ENCODE measurements at regions of chr12 and their contacts with region 1.

Region 1: DNA sequence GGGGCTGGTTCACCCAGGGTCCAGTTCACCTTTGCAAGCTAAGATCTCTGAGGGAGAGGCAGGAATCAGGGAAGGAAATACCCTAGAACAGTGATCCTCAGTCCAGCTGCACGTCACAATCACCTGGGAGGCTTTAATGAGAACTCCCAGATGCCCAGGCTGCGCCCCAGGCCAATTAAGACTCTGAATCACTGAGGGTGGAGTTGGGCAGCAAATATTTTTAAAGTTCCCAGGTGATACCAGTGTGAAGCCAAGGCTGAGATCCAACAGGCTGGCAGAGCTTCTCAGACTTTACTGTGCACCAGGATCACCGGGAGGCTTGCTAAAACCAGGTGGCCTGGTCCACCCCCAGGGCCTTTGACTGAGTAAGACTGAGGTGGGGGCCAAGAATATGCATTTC is 23.8 kb downstream of the MYL2 start:
- DNase-seq: no peak
- H3K4me3 ChIP-seq: no peak overlapping the region
- H3K27ac ChIP-seq: no peak overlapping the region
- H3K4me1 ChIP-seq: peaks cover 9% of the 10 kb centered on the region
- H3K27me3 ChIP-seq: peaks cover 0 to 2% of the 10 kb centered on the region in 2 experiments
- CTCF ChIP-seq: no peak
- POLR2A ChIP-seq: no peak

Region 2: GRCh38 chr12:110846615-110847566 is 49.7 kb before region 1 on chr12 and contains the start of gene CCDC63:
- CTCF ChIA-PET with region 1: no interaction called
- POLR2A ChIA-PET with region 1: no interaction called
- dilution Hi-C with region 1: no loop called
- intact Hi-C with region 1: no loop called
- DNase-seq: peak; percentile 50
- H3K4me3 ChIP-seq: no peak within 1 kb of the TSS
- H3K27ac ChIP-seq: no peak within 1 kb of the TSS
- H3K4me1 ChIP-seq: no peaks in the 10 kb centered on the region
- H3K27me3 ChIP-seq: peaks cover 11 to 24% of the 10 kb centered on the region in 2 experiments
- CTCF ChIP-seq: peak; percentile 37 to 70
- POLR2A ChIP-seq: no peak
- total RNA-seq, gene CCDC63: not detected in 2 replicates

Region 3: DNA sequence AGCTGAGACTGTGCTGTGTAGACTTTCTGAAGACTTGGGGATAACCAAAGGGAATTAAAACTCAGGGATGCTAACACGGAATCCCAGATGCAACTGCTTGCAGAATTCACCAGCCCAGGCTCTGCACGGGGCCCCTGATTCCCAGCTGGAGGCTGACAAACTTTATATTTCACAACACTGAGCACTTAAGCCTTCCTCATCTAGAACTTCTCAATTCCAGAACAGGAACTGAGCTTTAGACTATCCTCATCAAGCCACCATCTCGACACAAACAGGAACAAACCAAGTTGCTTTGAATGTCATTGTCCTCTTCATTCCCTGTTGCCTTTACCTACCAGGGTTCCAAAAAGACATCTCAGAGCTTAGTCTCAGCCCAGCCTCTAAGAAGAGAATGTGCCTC is 27.5 kb before region 1 on chr12:
- CTCF ChIA-PET with region 1: no interaction called
- POLR2A ChIA-PET with region 1: no interaction called
- dilution Hi-C with region 1: no loop called
- intact Hi-C with region 1: no loop called
- DNase-seq: no peak
- H3K4me3 ChIP-seq: no peak overlapping the region
- H3K27ac ChIP-seq: no peak overlapping the region
- H3K4me1 ChIP-seq: no peaks in the 10 kb centered on the region
- H3K27me3 ChIP-seq: peaks cover 1 to 2% of the 10 kb centered on the region in 2 experiments
- CTCF ChIP-seq: no peak
- POLR2A ChIP-seq: no peak

Region 4: GRCh38 chr12:110917466-110917865 is 20.9 kb after region 1 on chr12:
- CTCF ChIA-PET with region 1: interaction called, 8 read pairs
- POLR2A ChIA-PET with region 1: interaction called, 5 read pairs
- dilution Hi-C with region 1: no loop called
- intact Hi-C with region 1: loop called (anchors 1 kb)
- DNase-seq: peak; percentile 69
- H3K4me3 ChIP-seq: no peak overlapping the region
- H3K27ac ChIP-seq: peak overlapping the region; percentile 77
- H3K4me1 ChIP-seq: peaks cover 17% of the 10 kb centered on the region
- H3K27me3 ChIP-seq: no peaks in the 10 kb centered on the region
- CTCF ChIP-seq: no peak
- POLR2A ChIP-seq: no peak

Region 5: GRCh38 chr12:110937104-110937641 is 40.6 kb after region 1 on chr12:
- CTCF ChIA-PET with region 1: interaction called, 14 read pairs
- POLR2A ChIA-PET with region 1: no interaction called
- dilution Hi-C with region 1: no loop called
- intact Hi-C with region 1: loop called (anchors 1 kb)
- DNase-seq: peak; percentile 56
- H3K4me3 ChIP-seq: no peak overlapping the region
- H3K27ac ChIP-seq: no peak overlapping the region
- H3K4me1 ChIP-seq: no peaks in the 10 kb centered on the region
- H3K27me3 ChIP-seq: no peaks in the 10 kb centered on the region
- CTCF ChIP-seq: peak; percentile 94 to 98
- POLR2A ChIP-seq: no peak

Region 6: GRCh38 chr12:111024205-111024801 is 127.7 kb after region 1 on chr12:
- CTCF ChIA-PET with region 1: interaction called, 3 read pairs
- POLR2A ChIA-PET with region 1: no interaction called
- dilution Hi-C with region 1: no loop called
- intact Hi-C with region 1: loop called (anchors 2 kb)
- DNase-seq: peak; percentile 30
- H3K4me3 ChIP-seq: no peak overlapping the region
- H3K27ac ChIP-seq: no peak overlapping the region
- H3K4me1 ChIP-seq: no peaks in the 10 kb centered on the region
- H3K27me3 ChIP-seq: peaks cover 2 to 5% of the 10 kb centered on the region in 2 experiments
- CTCF ChIP-seq: peak; percentile 67 to 84
- POLR2A ChIP-seq: no peak

Region 7: DNA sequence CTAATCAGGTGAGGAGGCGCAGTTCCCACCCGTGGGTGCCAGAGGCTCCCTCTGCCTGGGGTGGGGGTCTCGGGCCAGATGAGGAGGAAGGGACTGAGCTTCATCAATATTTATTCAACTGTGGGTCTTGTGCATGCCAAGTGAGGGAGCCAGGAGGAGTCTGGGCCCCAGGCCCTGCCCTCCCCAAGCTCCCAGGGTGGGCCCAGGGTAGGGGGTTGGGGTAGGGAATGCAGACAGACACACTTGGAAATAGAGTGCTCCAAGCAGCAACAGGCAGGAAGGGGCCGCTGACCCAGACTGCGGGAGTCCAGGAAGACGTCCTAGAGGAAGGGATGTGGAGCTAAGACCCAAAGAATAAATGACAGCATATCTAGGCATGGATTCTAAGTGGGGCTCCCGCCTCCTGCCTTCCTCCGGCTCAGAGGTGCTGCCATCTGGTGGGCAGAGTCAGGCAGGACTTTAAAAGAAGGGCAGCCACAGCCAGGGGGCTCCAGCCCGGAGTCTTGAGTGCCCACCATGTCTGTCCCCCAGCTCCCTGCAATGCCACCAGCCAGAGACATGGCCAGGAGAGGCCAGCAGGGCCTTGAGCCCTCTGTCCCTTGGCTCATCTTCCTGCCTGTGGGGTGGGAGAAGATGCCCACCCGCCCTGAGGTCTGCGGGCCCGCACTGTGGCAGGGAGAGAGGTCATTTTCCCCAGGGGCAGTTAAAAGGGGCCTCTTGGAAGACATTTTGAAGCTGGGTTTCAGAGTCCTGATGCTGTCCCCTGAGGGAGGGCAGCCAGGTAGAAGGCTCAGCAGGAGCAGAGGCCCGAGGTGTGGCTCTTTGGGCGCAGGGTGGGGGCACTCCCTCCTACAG is 402.2 kb after region 1 on chr12:
- CTCF ChIA-PET with region 1: interaction called, 37 read pairs
- POLR2A ChIA-PET with region 1: no interaction called
- dilution Hi-C with region 1: no loop called
- intact Hi-C with region 1: loop called (anchors 1 kb)
- DNase-seq: peak; percentile 41
- H3K4me3 ChIP-seq: no peak overlapping the region
- H3K27ac ChIP-seq: no peak overlapping the region
- H3K4me1 ChIP-seq: no peaks in the 10 kb centered on the region
- H3K27me3 ChIP-seq: no peaks in the 10 kb centered on the region
- CTCF ChIP-seq: peak; percentile 84 to 89
- POLR2A ChIP-seq: no peak

Region 8: GRCh38 chr12:111313833-111314259 is 417.3 kb after region 1 on chr12:
- CTCF ChIA-PET with region 1: interaction called, 4 read pairs
- POLR2A ChIA-PET with region 1: no interaction called
- dilution Hi-C with region 1: no loop called
- intact Hi-C with region 1: loop called (anchors 1 kb)
- DNase-seq: peak; percentile 71
- H3K4me3 ChIP-seq: no peak overlapping the region
- H3K27ac ChIP-seq: no peak overlapping the region
- H3K4me1 ChIP-seq: peaks cover 7% of the 10 kb centered on the region
- H3K27me3 ChIP-seq: no peaks in the 10 kb centered on the region
- CTCF ChIP-seq: peak; percentile 94 to 96
- POLR2A ChIP-seq: no peak